ENCODE measurements at regions of chr3 and their contacts with region 1.

Region 1: DNA sequence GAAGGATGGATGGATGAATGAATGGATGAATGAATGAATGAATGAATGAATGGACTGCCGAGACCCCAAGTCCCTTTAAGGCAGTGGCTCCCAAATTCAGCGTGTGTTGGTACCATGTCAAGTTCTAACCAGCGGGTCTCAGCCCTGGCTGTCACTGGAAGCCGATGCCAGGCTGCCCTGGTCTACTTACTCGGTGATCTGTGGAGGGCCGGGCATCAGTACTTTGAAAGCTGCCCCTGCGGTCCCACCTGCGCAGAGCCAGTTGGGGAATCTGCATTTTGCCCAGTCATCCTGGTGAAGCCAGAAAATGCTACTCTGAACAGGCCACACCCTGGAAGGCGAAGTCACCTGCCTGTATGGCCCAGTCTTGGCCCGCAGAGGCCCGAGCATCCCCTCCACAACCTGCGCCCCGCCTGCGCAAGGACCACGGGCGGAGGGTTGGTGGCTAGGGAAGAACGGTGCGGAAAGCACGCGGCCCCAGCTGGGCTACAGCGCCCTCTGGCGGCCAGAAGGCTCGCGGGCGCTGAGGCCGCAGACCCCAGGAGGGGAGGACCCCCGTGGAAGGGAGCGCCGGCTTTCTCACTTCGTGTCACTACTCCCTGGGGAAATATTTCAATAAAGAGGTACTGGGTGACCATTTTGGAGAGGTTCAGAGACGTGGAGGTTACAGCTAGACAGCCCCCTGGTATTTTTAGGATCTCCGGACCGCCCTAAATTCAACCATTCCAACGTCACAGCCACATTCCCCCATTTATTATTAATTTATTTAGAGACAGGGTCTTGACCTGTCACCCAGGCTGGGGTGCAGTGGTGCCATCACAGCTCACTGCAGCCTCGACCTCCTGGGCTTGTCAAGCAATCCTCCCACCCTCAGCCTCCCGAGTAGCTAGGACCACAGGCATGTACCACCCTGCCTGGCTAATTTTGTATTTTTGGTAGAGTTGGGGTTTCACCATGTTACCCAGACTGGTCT is 34.9 kb downstream of the PRKCD start:
- DNase-seq: peak; percentile 67
- ATAC-seq: peak; percentile 74
- H3K4me3 Mint-ChIP-seq: no peak overlapping the region
- H3K27ac Mint-ChIP-seq: no peak overlapping the region
- H3K4me1 Mint-ChIP-seq: peaks cover 8% of the 10 kb centered on the region
- H3K27me3 Mint-ChIP-seq: peaks cover 1% of the 10 kb centered on the region
- CTCF ChIP-seq: peak; percentile 99

Region 2: DNA sequence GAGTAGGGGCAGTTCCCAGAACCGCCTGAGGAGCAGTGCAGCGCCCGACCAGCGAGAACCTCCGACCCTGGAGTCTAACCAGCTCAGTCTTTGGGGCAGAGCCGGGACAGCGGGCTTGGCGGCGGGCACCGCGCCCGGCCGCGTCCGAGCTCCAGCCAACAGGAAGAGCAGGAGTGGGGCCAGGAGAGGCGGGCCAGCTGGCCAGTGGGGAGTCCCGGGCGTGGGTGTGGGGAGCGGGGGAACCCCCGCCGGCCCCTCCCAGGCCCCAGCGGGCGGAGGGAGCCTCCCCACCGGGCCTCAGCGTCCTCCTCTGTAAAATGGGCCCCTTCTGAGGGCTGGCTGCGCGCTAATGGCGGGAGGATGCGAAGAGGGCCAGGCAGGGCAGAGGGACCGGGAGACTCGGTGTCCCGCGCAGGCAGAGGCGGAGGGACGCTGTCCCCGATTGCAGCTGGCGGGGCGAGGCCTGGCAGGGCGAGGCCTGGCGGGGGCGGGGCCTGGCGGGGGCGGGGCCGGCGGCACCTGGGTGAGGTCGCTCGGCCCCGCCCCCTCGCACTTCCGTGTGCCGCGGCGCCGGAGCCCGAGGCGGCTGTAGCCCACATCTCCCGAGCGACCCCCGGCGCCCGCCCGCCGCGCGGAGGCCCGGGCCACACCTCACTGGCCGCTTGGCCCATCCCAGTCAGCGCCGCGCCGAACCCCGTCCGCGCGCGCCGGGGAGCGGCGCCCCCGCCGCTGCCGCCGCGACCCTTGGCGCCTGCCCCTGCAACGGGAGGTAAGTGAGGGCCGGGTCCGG is 35.0 kb before region 1 on chr3 and contains the start of gene PRKCD:
- CTCF ChIA-PET with region 1: interaction called, 19 read pairs
- POLR2A ChIA-PET with region 1: no interaction called
- intact Hi-C with region 1: no loop called
- DNase-seq: peak; percentile 82
- ATAC-seq: peak; percentile 75
- H3K4me3 Mint-ChIP-seq: peak within 1 kb of the TSS; percentile 79
- H3K27ac Mint-ChIP-seq: peak within 1 kb of the TSS; percentile 78
- H3K4me1 Mint-ChIP-seq: peaks cover 21% of the 10 kb centered on the region
- H3K27me3 Mint-ChIP-seq: peaks cover 12% of the 10 kb centered on the region
- CTCF ChIP-seq: peak; percentile 63
- total RNA-seq, gene PRKCD: 18.7 to 21.5 TPM

Region 3: GRCh38 chr3:53239800-53240199 is 43.9 kb after region 1 on chr3:
- CTCF ChIA-PET with region 1: no interaction called
- POLR2A ChIA-PET with region 1: no interaction called
- intact Hi-C with region 1: no loop called
- DNase-seq: no peak
- ATAC-seq: no peak
- H3K4me3 Mint-ChIP-seq: no peak overlapping the region
- H3K27ac Mint-ChIP-seq: no peak overlapping the region
- H3K4me1 Mint-ChIP-seq: peaks cover 8% of the 10 kb centered on the region
- H3K27me3 Mint-ChIP-seq: no peaks in the 10 kb centered on the region
- CTCF ChIP-seq: no peak

Measured in activated CD8-positive, alpha-beta T cell treated with anti-CD3 and anti-CD28 coated beads for 36 hours (primary cell).